ENCODE measurements at regions of chr12 and their contacts with region 1.

Region 1: DNA sequence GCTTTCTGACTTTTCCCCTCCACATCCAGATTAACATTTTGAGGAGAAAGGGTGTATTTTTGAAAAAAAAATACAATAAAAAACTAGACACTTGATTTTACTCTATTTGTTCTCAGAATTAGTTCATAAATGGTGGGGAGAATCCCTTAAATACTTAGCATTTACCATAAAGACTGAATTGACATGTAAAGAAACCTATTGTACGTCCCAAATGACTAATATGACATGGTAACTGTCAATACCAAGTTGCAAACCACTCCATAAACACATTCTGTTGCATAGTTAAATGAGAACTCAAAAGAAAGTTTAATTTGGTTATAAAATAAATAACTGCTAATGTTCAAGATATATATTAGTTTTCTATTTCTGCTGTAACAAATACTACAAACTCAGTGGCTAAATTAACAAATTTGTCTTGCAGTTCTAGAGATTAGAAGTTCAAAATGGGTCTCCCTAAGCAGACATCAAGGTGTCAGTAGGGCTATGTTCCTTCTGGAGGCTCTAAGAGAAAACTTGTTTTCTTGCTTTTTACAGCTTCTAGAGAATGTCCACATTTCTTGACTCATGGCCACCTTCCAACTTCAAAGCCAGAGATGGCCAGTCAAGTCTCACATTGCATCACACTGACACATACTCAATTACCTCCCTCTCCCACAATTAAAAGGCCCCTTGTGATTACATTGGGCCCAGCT is 16.0 kb downstream of the NELL2 start:
- DNase-seq: no peak
- H3K4me3 Mint-ChIP-seq: no peak overlapping the region
- H3K27ac Mint-ChIP-seq: peak overlapping the region; percentile 36
- H3K4me1 Mint-ChIP-seq: peaks cover 42% of the 10 kb centered on the region
- H3K27me3 Mint-ChIP-seq: no peaks in the 10 kb centered on the region

Region 2: GRCh38 chr12:44842669-44843068 is 17.5 kb before region 1 on chr12:
- intact Hi-C with region 1: loop called (anchors 2 kb)
- DNase-seq: no peak
- H3K4me3 Mint-ChIP-seq: peak overlapping the region; percentile 71
- H3K27ac Mint-ChIP-seq: peak overlapping the region; percentile 89
- H3K4me1 Mint-ChIP-seq: peaks cover 43% of the 10 kb centered on the region
- H3K27me3 Mint-ChIP-seq: no peaks in the 10 kb centered on the region

Measured in activated CD4-positive, alpha-beta T cell treated with anti-CD3 and anti-CD28 coated beads, Interleukin-2, amount 10 ng/mL, durations not matched to agents 24 days and 14 days (primary cell).